Activated CD8-positive, alpha-beta T cell treated with anti-CD3 and anti-CD28 coated beads for 36 hours (primary cell): ENCODE measurements at regions of chr10 and their contacts with region 1.

Region 1: GRCh38 chr10:26725837-26726727 is 28.6 kb downstream of the PDSS1 start:
- DNase-seq: peak; percentile 39
- ATAC-seq: peak; percentile 43
- H3K4me3 Mint-ChIP-seq: no peak overlapping the region
- H3K27ac Mint-ChIP-seq: no peak overlapping the region
- H3K4me1 Mint-ChIP-seq: peaks cover 8% of the 10 kb centered on the region
- H3K27me3 Mint-ChIP-seq: no peaks in the 10 kb centered on the region
- CTCF ChIP-seq: peak; percentile 98

Region 2: GRCh38 chr10:26697163-26697921 is 28.7 kb before region 1 on chr10 and contains the start of gene PDSS1:
- CTCF ChIA-PET with region 1: interaction called, 10 read pairs
- POLR2A ChIA-PET with region 1: no interaction called
- intact Hi-C with region 1: no loop called
- DNase-seq: peak; percentile 76
- ATAC-seq: peak; percentile 80
- H3K4me3 Mint-ChIP-seq: peak within 1 kb of the TSS; percentile 100
- H3K27ac Mint-ChIP-seq: peak within 1 kb of the TSS; percentile 93
- H3K4me1 Mint-ChIP-seq: peaks cover 25% of the 10 kb centered on the region
- H3K27me3 Mint-ChIP-seq: no peaks in the 10 kb centered on the region
- CTCF ChIP-seq: no peak
- total RNA-seq, gene PDSS1: 16.1 to 18.8 TPM

Region 3: GRCh38 chr10:26714415-26715136 is 11.5 kb before region 1 on chr10:
- CTCF ChIA-PET with region 1: interaction called, 22 read pairs
- POLR2A ChIA-PET with region 1: interaction called, 4 read pairs
- intact Hi-C with region 1: no loop called
- DNase-seq: no peak
- ATAC-seq: no peak
- H3K4me3 Mint-ChIP-seq: no peak overlapping the region
- H3K27ac Mint-ChIP-seq: no peak overlapping the region
- H3K4me1 Mint-ChIP-seq: no peaks in the 10 kb centered on the region
- H3K27me3 Mint-ChIP-seq: no peaks in the 10 kb centered on the region
- CTCF ChIP-seq: no peak

Region 4: GRCh38 chr10:26755443-26755903 is 29.4 kb after region 1 on chr10:
- CTCF ChIA-PET with region 1: interaction called, 18 read pairs
- POLR2A ChIA-PET with region 1: no interaction called
- intact Hi-C with region 1: no loop called
- DNase-seq: no peak
- ATAC-seq: no peak
- H3K4me3 Mint-ChIP-seq: no peak overlapping the region
- H3K27ac Mint-ChIP-seq: peak overlapping the region; percentile 75
- H3K4me1 Mint-ChIP-seq: peaks cover 5% of the 10 kb centered on the region
- H3K27me3 Mint-ChIP-seq: no peaks in the 10 kb centered on the region
- CTCF ChIP-seq: no peak

Region 5: GRCh38 chr10:26881600-26882331 is 155.7 kb after region 1 on chr10:
- CTCF ChIA-PET with region 1: interaction called, 72 read pairs
- POLR2A ChIA-PET with region 1: interaction called, 3 read pairs
- intact Hi-C with region 1: loop called (anchors 2 kb)
- DNase-seq: no peak
- ATAC-seq: peak; percentile 51
- H3K4me3 Mint-ChIP-seq: no peak overlapping the region
- H3K27ac Mint-ChIP-seq: no peak overlapping the region
- H3K4me1 Mint-ChIP-seq: peaks cover 3% of the 10 kb centered on the region
- H3K27me3 Mint-ChIP-seq: peaks cover 7% of the 10 kb centered on the region
- CTCF ChIP-seq: peak; percentile 82